ENCODE measurements at regions of chr6 and their contacts with region 1.

Region 1: DNA sequence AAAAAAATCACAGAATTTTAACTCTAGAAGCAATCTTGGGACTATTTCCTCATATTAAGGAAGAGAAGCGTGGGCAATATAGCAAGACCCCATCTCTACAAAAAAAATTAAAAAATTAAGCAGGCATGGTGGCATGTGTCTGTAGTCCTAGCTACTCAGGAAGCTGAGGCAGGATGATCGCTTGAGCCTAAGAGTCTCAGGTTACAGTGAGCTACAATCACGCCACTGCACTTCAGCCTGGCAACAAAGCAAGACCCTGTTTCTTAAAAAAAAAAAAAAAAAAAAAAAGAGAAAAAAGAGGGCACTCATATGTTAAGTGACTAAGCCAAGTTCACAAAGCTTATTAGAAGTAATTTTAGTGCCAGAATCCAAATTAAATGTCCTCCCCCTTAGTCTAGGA is 100.8 kb downstream of the SESN1 start:
- DNase-seq: no peak
- H3K4me3 ChIP-seq: no peak overlapping the region
- H3K27ac ChIP-seq: no peak overlapping the region
- H3K4me1 ChIP-seq: no peaks in the 10 kb centered on the region
- H3K27me3 ChIP-seq: no peaks in the 10 kb centered on the region
- CTCF ChIP-seq: no peak

Region 2: GRCh38 chr6:108820006-108820405 is 173.9 kb before region 1 on chr6:
- CTCF ChIA-PET with region 1: no interaction called
- dilution Hi-C with region 1: no loop called
- in situ Hi-C with region 1: no loop called
- intact Hi-C with region 1: no loop called
- DNase-seq: no peak
- H3K4me3 ChIP-seq: no peak overlapping the region
- H3K27ac ChIP-seq: no peak overlapping the region
- H3K4me1 ChIP-seq: no peaks in the 10 kb centered on the region
- H3K27me3 ChIP-seq: no peaks in the 10 kb centered on the region
- CTCF ChIP-seq: no peak

Region 3: GRCh38 chr6:109079981-109080380 is 86.1 kb after region 1 on chr6:
- CTCF ChIA-PET with region 1: interaction called, 29 read pairs
- dilution Hi-C with region 1: no loop called
- in situ Hi-C with region 1: no loop called
- intact Hi-C with region 1: no loop called
- DNase-seq: no peak
- H3K4me3 ChIP-seq: no peak overlapping the region
- H3K27ac ChIP-seq: no peak overlapping the region
- H3K4me1 ChIP-seq: peaks cover 3% of the 10 kb centered on the region
- H3K27me3 ChIP-seq: no peaks in the 10 kb centered on the region
- CTCF ChIP-seq: no peak

Measured in mammary epithelial cell (primary cell).